Mammary epithelial cell (primary cell): ENCODE measurements at regions of chr4 and their contacts with region 1.

Region 1: DNA sequence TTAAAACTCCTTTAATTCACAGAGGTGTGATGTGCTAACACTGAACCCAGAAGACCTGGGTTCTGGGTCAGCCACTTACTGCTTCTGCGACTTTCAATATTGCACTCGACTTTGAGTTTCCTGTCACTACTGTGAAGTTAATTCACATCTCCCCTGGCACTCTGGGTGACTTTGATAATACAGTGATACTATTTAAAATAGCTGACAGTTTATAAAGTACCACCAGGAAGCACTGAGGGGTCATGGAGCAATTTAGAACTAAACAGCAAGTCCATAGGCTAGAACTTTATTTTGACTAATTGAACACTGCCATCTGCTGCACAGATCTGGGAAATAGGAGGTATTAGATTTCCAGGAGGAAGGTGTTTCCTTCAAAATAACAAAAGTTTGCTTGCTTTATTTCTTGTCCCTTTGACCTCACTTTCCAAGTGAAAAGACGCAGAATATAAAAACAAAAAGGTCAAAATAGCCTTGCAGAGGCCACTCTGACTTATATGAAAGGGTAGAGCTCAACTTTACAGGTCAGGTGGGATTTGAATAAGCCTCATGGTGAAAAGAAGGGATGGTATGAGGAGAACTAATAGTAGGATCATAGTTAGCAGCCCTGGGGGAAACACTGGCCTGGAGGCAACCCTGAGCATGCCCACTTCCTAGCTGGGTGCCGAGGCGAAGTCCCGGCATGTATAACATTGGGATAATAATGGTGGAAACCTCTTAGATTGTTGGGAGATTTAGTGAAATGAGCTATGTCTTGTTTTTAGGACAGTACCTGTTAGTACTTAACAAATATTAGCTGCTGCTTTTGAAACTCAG is 53.4 kb downstream of the ZNF518B start:
- DNase-seq: peak; percentile 45
- H3K4me3 ChIP-seq: no peak overlapping the region
- H3K27ac ChIP-seq: no peak overlapping the region
- H3K4me1 ChIP-seq: peaks cover 7% of the 10 kb centered on the region
- H3K27me3 ChIP-seq: no peaks in the 10 kb centered on the region
- CTCF ChIP-seq: peak; percentile 52 to 60

Region 2: DNA sequence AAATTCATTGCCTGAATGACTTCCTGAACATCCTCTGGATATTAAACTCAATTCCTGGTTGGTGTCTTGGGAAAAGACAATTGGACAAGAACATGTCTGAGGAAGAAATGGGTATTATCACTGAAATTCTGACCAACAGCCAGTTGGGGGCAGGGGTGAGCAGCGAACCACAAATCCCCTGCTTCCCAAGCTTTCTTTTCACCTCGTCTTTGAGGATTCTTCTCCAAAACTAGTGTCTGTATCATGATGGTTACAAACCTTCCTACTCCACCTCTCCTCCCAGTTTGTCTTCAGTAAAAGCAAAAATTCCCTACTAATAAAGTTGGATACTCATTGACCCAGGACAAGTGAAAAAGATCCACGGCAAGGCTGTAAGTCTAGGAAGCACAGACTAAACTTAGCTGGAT is 239.0 kb before region 1 on chr4:
- CTCF ChIA-PET with region 1: interaction called, 11 read pairs
- dilution Hi-C with region 1: no loop called
- in situ Hi-C with region 1: loop called (anchors 5 to 10 kb)
- intact Hi-C with region 1: loop called (anchors 1 kb)
- DNase-seq: no peak
- H3K4me3 ChIP-seq: no peak overlapping the region
- H3K27ac ChIP-seq: no peak overlapping the region
- H3K4me1 ChIP-seq: peaks cover 6% of the 10 kb centered on the region
- H3K27me3 ChIP-seq: no peaks in the 10 kb centered on the region
- CTCF ChIP-seq: peak; percentile 74 to 76

Region 3: GRCh38 chr4:10245751-10246150 is 158.1 kb before region 1 on chr4:
- CTCF ChIA-PET with region 1: no interaction called
- dilution Hi-C with region 1: no loop called
- in situ Hi-C with region 1: no loop called
- intact Hi-C with region 1: loop called (anchors 5 kb)
- DNase-seq: no peak
- H3K4me3 ChIP-seq: no peak overlapping the region
- H3K27ac ChIP-seq: no peak overlapping the region
- H3K4me1 ChIP-seq: no peaks in the 10 kb centered on the region
- H3K27me3 ChIP-seq: no peaks in the 10 kb centered on the region
- CTCF ChIP-seq: no peak

Region 4: DNA sequence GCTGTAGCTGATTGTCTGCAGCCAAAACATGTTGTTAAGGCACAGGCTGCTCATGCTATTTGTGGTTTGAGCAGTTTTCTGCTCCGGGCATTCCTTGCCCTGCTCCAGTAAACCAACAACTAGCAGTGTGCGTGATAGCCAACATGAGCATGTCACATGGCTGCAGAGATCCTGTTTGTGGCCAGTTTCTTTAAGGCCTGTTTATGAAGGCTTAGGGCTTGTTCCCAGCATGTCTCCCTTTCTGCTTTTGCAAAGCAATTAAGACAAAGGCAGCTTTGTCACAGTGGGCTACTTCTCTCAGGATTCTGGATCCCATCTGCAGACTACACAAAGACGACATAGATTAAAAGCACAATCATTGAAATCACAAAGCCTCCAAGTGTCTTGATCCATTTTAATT is 107.1 kb before region 1 on chr4:
- CTCF ChIA-PET with region 1: no interaction called
- dilution Hi-C with region 1: no loop called
- in situ Hi-C with region 1: no loop called
- intact Hi-C with region 1: no loop called
- DNase-seq: peak; percentile 71
- H3K4me3 ChIP-seq: no peak overlapping the region
- H3K27ac ChIP-seq: no peak overlapping the region
- H3K4me1 ChIP-seq: peaks cover 18% of the 10 kb centered on the region
- H3K27me3 ChIP-seq: no peaks in the 10 kb centered on the region
- CTCF ChIP-seq: no peak

Region 5: DNA sequence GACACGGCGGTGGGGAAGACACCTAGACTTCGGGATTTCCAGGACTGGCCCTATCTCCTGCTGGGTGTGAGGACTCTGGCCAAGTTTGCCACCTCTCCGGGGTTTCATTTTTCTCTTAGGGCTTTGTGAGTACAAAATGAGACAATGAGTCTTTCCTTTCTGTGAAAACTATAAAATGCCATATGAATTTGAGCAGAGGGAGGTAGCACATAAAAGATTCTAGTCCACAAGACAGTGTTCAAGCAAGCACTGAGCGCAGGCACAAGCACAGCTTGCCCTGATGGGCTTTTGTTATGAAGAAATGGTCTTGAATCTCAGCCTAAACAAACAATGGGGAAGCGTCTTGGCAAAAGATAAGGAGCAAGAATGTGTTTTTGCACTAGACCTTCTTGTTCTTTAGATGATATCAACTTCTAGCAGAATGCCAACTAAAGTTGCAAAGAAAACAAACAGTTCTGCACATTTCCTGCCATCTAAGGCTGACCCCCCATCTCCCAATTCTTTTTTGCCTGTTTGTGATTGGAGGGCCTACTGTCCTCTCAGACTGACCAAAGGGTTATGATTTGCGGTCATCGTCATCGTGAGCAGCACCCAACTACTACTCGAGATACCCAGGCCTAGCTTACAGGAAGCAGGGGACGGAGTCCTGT is 126.4 kb after region 1 on chr4:
- CTCF ChIA-PET with region 1: no interaction called
- dilution Hi-C with region 1: no loop called
- in situ Hi-C with region 1: loop called in 1 of 2 experiments (anchors 10 kb)
- intact Hi-C with region 1: no loop called
- DNase-seq: peak; percentile 10
- H3K4me3 ChIP-seq: no peak overlapping the region
- H3K27ac ChIP-seq: no peak overlapping the region
- H3K4me1 ChIP-seq: peaks cover 34% of the 10 kb centered on the region
- H3K27me3 ChIP-seq: no peaks in the 10 kb centered on the region
- CTCF ChIP-seq: no peak

Region 6: GRCh38 chr4:10640561-10641201 is 236.8 kb after region 1 on chr4:
- CTCF ChIA-PET with region 1: no interaction called
- dilution Hi-C with region 1: no loop called
- in situ Hi-C with region 1: no loop called
- intact Hi-C with region 1: no loop called
- DNase-seq: peak; percentile 56
- H3K4me3 ChIP-seq: no peak overlapping the region
- H3K27ac ChIP-seq: no peak overlapping the region
- H3K4me1 ChIP-seq: peaks cover 19% of the 10 kb centered on the region
- H3K27me3 ChIP-seq: no peaks in the 10 kb centered on the region
- CTCF ChIP-seq: no peak